Activated CD4-positive, alpha-beta T cell treated with anti-CD3 and anti-CD28 coated beads, Interleukin-2, amount 10 ng/mL, durations not matched to agents 24 days and 14 days (primary cell): ENCODE measurements at regions of chr2 and their contacts with region 1.

Region 1: GRCh38 chr2:204972606-204973336 is 427.5 kb downstream of the PARD3B start:
- DNase-seq: no peak
- H3K4me3 Mint-ChIP-seq: no peak overlapping the region
- H3K27ac Mint-ChIP-seq: peak overlapping the region; percentile 62
- H3K4me1 Mint-ChIP-seq: peaks cover 34% of the 10 kb centered on the region
- H3K27me3 Mint-ChIP-seq: no peaks in the 10 kb centered on the region

Region 2: DNA sequence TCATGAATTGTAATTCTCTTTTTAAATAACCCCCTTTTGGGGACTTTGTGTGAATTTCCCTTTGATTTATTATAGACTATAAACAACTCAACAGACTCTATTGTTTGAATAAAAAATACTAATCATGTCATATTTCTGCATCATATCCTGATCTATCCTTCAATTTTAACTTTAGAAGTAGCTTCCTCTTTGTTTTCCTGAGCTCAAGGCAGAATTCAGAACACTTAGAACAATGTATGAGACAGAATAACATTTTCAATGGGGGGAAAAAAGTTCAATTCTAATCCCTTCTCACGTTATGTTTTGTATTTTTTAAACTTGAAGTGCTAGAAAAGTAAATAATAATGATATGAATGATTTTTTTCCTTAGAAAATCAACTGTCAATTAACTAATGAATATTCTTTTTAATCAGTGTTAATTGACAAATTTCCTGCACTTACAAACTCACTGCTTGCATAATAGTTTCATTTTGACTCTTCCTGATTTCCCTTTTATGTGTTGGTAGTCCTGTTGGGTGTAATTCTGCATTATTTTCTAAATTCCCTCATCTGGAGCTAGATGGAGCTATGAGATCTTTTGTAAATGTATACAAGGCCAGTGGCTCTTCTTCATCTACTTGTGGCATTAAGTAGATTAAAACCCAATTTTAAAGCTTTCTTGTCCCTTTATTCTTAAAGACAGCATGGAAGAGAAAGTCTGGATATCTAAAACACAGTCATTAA is 101.4 kb before region 1 on chr2:
- intact Hi-C with region 1: loop called (anchors 1 kb)
- DNase-seq: peak; percentile 66
- H3K4me3 Mint-ChIP-seq: no peak overlapping the region
- H3K27ac Mint-ChIP-seq: no peak overlapping the region
- H3K4me1 Mint-ChIP-seq: peaks cover 21% of the 10 kb centered on the region
- H3K27me3 Mint-ChIP-seq: peaks cover 15% of the 10 kb centered on the region

Region 3: DNA sequence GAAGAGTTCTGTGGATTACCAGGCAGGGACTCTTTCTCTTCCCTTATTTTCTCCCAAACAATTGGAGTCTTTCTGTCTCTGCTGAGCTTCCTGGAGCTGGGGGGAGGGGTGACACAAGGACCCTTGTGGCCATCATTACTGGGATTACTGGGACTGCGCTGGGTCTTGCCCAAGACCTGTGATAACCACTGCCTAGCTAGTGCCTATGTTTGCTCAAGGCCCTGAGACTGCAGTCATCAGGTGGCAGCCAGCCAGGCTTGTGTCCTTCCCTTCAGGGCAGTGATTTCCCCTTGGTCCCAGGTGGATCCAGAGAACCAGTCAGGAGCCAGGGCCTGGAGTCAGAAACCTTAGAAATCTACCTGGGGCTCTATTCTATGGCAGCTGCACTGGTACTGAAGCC is 71.9 kb before region 1 on chr2:
- intact Hi-C with region 1: loop called (anchors 5 kb)
- DNase-seq: no peak
- H3K4me3 Mint-ChIP-seq: no peak overlapping the region
- H3K27ac Mint-ChIP-seq: no peak overlapping the region
- H3K4me1 Mint-ChIP-seq: peaks cover 29% of the 10 kb centered on the region
- H3K27me3 Mint-ChIP-seq: no peaks in the 10 kb centered on the region

Region 4: DNA sequence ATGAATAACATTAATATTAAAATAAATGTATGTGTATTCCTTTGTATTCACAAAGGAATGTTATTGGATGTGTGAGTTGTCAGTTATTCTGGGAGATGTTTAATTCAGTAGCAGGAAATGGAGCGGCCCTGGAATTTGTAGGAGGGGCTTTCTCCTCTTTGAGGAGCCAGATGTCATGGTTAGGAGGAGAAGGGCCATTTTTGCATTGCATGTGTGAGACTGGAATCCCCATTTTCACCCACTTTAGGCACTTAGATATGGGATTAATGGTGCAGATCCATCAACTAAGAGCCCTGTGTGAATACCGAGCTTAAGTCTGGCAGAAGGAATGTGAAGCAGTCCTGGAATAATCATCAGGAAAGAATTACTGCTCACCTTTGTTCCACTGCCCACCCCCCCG is 11.7 kb after region 1 on chr2:
- intact Hi-C with region 1: no loop called
- DNase-seq: no peak
- H3K4me3 Mint-ChIP-seq: no peak overlapping the region
- H3K27ac Mint-ChIP-seq: no peak overlapping the region
- H3K4me1 Mint-ChIP-seq: peaks cover 15% of the 10 kb centered on the region
- H3K27me3 Mint-ChIP-seq: peaks cover 4% of the 10 kb centered on the region

Region 5: GRCh38 chr2:205024822-205025518 is 52.2 kb after region 1 on chr2:
- intact Hi-C with region 1: loop called (anchors 2 kb)
- DNase-seq: peak; percentile 73
- H3K4me3 Mint-ChIP-seq: peak overlapping the region; percentile 51
- H3K27ac Mint-ChIP-seq: peak overlapping the region; percentile 35
- H3K4me1 Mint-ChIP-seq: peaks cover 25% of the 10 kb centered on the region
- H3K27me3 Mint-ChIP-seq: no peaks in the 10 kb centered on the region

Region 6: GRCh38 chr2:205077159-205077558 is 104.4 kb after region 1 on chr2:
- intact Hi-C with region 1: loop called (anchors 2 kb)
- DNase-seq: peak; percentile 79
- H3K4me3 Mint-ChIP-seq: peak overlapping the region; percentile 66
- H3K27ac Mint-ChIP-seq: peak overlapping the region; percentile 62
- H3K4me1 Mint-ChIP-seq: peaks cover 38% of the 10 kb centered on the region
- H3K27me3 Mint-ChIP-seq: no peaks in the 10 kb centered on the region